ENCODE measurements at regions of chr2 and their contacts with region 1.

Region 1: DNA sequence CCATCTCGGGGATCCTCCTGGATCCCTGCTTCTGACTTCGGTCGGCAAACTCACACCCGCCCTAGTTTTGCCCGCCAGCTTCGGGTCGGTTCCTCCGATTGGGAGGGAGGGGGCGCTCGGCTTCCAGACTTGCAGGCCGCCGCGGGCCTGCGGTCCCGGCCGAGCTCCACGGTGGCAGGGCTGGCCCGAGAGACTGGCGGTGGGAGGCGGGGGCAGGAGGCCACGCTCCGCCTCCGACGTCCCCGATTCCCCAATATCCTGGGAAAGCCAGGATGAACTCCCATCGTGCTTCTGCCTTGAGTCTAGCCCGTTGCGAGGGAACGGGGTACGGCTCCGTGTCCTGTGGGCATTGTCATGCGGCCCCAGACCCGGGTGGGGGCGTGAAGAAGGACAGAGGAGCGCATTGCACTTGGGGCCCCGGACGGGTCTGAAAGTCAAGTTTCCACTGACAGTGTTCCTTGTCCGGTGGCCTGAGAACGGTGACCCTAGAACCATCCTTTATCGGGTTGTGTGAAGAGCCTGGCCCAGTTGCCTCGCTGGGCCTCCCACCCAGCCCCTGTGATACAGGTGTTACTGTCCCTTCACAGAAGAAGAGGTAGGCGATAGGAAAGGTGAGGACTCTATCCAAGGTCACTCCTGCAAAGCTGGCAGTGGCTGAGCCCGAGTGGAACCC is 2.4 kb upstream of the INHBB start:
- DNase-seq: peak; percentile 54 to 84 (median 72)
- H3K4me3 ChIP-seq: peak overlapping the region in 51 of 59 donors; percentile 4 to 74 (median 55)
- H3K27ac ChIP-seq: peak overlapping the region in 4 of 59 donors; percentile 20 to 32 (median 25)
- H3K27me3 ChIP-seq: peaks cover 0 to 81% (median 39%) of the 10 kb centered on the region in 45 donors
- CTCF ChIP-seq: peak; percentile 52 to 96 (median 88)

Region 2: GRCh38 chr2:120231974-120232635 is 111.5 kb before region 1 on chr2:
- intact Hi-C with region 1: no loop called
- DNase-seq: peak in 1 of 10 donors; percentile 20
- H3K4me3 ChIP-seq: peak overlapping the region in 57 of 59 donors; percentile 4 to 64 (median 41)
- H3K27ac ChIP-seq: peak overlapping the region in 22 of 59 donors; percentile 0 to 71 (median 46)
- H3K27me3 ChIP-seq: no peaks in the 10 kb centered on the region
- CTCF ChIP-seq: no peak

Region 3: GRCh38 chr2:120436885-120437603 is 93.5 kb after region 1 on chr2:
- intact Hi-C with region 1: loop called in 1 of 2 experiments (anchors 5 kb)
- DNase-seq: peak in 2 of 10 donors; percentile 0 to 19
- H3K4me3 ChIP-seq: no peak overlapping the region
- H3K27ac ChIP-seq: no peak overlapping the region
- H3K27me3 ChIP-seq: peaks cover 0 to 39% (median 3%) of the 10 kb centered on the region in 45 donors
- CTCF ChIP-seq: peak in 28 of 56 donors; percentile 6 to 34 (median 25)

Region 4: GRCh38 chr2:120511947-120512710 is 168.6 kb after region 1 on chr2:
- intact Hi-C with region 1: loop called in 1 of 2 experiments (anchors 10 kb)
- DNase-seq: peak in 2 of 10 donors; percentile 31 to 40
- H3K4me3 ChIP-seq: peak overlapping the region in 8 of 59 donors; percentile 3 to 27 (median 9)
- H3K27ac ChIP-seq: peak overlapping the region in 4 of 59 donors; percentile 7 to 56 (median 28)
- H3K27me3 ChIP-seq: peaks cover 0 to 12% (median 0%) of the 10 kb centered on the region in 45 donors
- CTCF ChIP-seq: peak in 1 of 56 donors; percentile 9

Region 5: DNA sequence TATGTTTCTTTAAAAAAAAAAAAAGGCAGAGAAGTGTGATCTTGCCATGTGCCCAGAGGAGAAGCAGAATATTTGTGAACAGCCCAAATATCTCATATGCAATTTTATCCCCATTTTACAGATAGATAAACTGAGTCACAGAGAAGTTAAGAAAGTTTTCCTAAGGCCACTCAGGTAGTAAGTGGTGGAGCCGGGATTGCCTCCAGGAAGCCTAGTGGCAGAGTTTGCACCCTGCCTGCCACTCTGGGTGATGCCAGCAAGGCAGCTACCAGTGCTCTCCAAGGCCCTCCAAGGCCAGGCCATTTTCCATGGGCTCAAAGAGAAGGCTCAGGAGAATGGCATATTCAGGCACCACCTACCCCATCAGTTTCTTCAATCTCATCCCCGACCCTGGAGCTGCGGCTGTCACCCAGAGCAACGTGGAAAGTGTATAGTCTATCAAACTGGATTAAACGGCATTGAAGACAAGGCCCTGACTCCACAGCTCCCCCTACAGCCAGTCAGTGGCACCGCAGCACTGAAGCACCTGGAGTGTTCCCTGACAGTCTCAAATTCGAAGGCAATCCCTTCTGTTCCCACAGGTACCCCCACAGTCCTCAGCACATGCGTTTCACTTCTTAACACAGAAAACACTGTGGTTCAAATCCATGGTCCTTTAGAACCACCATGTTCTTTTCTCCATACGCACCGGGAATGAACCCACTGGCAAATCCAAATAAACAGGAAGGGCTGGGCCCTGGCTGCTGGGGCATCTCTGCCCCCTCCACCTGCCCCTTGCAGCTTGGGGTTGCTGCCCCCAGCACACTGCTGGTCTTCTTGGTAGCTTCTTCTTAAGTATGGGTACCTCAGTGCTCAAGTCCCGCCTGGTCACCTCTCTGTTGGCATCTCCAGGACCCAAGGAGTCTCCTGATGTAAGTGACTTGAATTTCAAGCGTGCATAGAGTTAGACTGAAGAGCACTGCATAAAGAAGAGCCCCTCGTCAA is 177.7 kb after region 1 on chr2:
- intact Hi-C with region 1: loop called (anchors 2 to 10 kb)
- DNase-seq: peak in 4 of 10 donors; percentile 31 to 43 (median 40)
- H3K4me3 ChIP-seq: no peak overlapping the region
- H3K27ac ChIP-seq: no peak overlapping the region
- H3K27me3 ChIP-seq: peaks cover 0 to 29% (median 5%) of the 10 kb centered on the region in 45 donors
- CTCF ChIP-seq: peak in 55 of 56 donors; percentile 16 to 74 (median 65)

Region 6: GRCh38 chr2:120589771-120590608 is 246.4 kb after region 1 on chr2:
- intact Hi-C with region 1: loop called in 1 of 2 experiments (anchors 5 kb)
- DNase-seq: no peak
- H3K4me3 ChIP-seq: no peak overlapping the region
- H3K27ac ChIP-seq: no peak overlapping the region
- H3K27me3 ChIP-seq: peaks cover 0 to 15% (median 0%) of the 10 kb centered on the region in 45 donors
- CTCF ChIP-seq: no peak

Region 7: DNA sequence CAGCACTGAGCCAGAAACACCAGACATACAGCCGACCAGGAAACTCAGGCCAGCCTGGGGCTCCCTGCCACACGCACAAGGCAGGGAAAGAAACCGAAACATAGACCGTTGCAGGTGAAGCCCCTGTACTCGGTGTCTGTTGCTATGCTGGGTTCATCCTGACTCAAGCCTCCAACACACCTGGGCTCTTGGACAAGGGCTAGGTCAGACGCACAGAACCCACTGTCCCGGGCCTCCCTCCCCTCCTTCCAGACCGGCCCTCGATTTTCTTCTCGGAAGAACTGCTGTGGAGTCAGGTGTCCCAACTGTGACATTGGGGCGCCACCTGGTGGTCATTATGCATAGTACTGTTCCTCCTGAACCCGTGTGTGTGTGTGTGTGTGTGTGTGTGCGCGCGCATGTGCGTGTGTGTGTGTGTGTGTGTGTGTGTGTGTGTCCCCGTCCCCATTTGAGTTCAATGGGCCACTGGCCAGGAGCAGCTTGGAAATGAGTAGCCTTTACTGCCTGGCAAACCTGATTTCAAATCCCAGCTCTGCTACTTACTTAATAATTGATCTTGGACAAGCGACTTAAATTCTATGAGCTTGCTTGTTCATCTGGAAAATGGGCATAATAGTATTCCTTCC is 336.7 kb after region 1 on chr2:
- intact Hi-C with region 1: loop called (anchors 1 to 2 kb)
- DNase-seq: peak; percentile 68 to 89 (median 84)
- H3K4me3 ChIP-seq: peak overlapping the region in 3 of 59 donors; percentile 17 to 23 (median 23)
- H3K27ac ChIP-seq: no peak overlapping the region
- H3K27me3 ChIP-seq: peaks cover 0 to 22% (median 5%) of the 10 kb centered on the region in 45 donors
- CTCF ChIP-seq: peak in 54 of 56 donors; percentile 34 to 73 (median 59)

Region 8: GRCh38 chr2:121076885-121077549 is 733.4 kb after region 1 on chr2:
- intact Hi-C with region 1: loop called (anchors 5 kb)
- DNase-seq: peak in 2 of 10 donors; percentile 24 to 38
- H3K4me3 ChIP-seq: no peak overlapping the region
- H3K27ac ChIP-seq: no peak overlapping the region
- H3K27me3 ChIP-seq: peaks cover 0 to 18% (median 0%) of the 10 kb centered on the region in 45 donors
- CTCF ChIP-seq: peak; percentile 39 to 79 (median 65)

Measured in dorsolateral prefrontal cortex (tissue), 120 donors.